ENCODE measurements at regions of chr18 and their contacts with region 1.

Region 1: DNA sequence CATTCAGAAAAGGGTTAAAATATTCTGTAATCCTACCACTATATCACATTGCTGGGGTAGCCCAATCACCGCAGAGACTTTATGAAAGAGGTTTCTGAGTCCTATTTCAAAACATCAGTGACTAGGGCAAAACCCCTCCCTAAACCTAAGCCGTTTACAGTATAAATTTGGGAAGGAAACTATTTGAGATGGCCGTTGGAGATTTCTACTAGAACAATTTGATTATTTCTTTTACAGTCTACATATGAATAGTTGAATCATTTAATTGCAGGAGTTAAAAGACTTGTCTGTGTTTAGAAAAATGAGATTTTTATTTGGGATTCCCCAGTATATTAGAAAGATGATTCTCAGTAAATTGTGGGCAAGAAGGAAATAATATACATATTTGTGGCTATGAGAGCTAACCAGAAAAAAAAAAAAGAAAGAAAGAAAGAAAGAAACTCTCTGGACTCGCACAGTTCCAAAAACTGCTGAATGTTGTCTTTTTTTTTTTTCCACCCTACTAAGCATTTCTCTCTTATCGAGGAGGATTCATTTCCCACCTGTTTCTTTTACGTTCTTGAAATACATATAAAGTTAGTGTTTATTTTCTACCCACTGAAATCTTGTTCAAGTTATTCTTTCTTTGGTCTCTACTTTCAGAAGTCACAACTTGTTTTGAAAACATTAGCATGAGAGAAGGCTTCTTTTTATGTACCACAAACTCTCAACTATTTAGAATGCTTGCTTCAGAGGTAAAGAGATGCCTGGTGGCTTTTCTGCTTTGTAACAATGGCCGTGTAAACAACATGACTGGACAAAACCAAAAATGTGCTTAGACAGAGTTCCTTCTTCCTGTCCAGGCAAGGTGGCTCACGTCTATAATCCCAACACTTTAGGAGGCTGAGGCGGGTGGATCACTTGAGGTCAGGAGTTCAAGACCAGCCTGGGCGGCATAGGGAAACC is 65.9 kb downstream of the BCL2 start:
- DNase-seq: no peak
- ATAC-seq: peak; percentile 74
- H3K4me3 ChIP-seq: no peak overlapping the region
- H3K4me3 Mint-ChIP-seq: peak overlapping the region in 8 of 10 donors; percentile 1 to 64 (median 32)
- H3K27ac ChIP-seq: no peak overlapping the region
- H3K27ac Mint-ChIP-seq: peak overlapping the region in 8 of 9 donors; percentile 9 to 79 (median 53)
- H3K4me1 ChIP-seq: peaks cover 7 to 25% of the 10 kb centered on the region in 2 donors
- H3K4me1 Mint-ChIP-seq: peaks cover 42 to 81% (median 73%) of the 10 kb centered on the region in 7 donors
- H3K27me3 ChIP-seq: no peaks in the 10 kb centered on the region
- H3K27me3 Mint-ChIP-seq: no peaks in the 10 kb centered on the region

Region 2: GRCh38 chr18:62545098-62545497 is 708.6 kb before region 1 on chr18:
- CTCF ChIA-PET with region 1: no interaction called
- POLR2A ChIA-PET with region 1: no interaction called
- intact Hi-C with region 1: no loop called
- DNase-seq: no peak
- ATAC-seq: no peak
- H3K4me3 ChIP-seq: no peak overlapping the region
- H3K4me3 Mint-ChIP-seq: no peak overlapping the region
- H3K27ac ChIP-seq: no peak overlapping the region
- H3K27ac Mint-ChIP-seq: no peak overlapping the region
- H3K4me1 ChIP-seq: no peaks in the 10 kb centered on the region
- H3K4me1 Mint-ChIP-seq: peaks cover 0 to 18% (median 15%) of the 10 kb centered on the region in 7 donors
- H3K27me3 ChIP-seq: no peaks in the 10 kb centered on the region
- H3K27me3 Mint-ChIP-seq: no peaks in the 10 kb centered on the region

Region 3: GRCh38 chr18:63236413-63236812 is 17.3 kb before region 1 on chr18:
- CTCF ChIA-PET with region 1: interaction called, 3 read pairs
- POLR2A ChIA-PET with region 1: interaction called, 3 read pairs
- intact Hi-C with region 1: loop called in 1 of 2 experiments (anchors 2 kb)
- DNase-seq: no peak
- ATAC-seq: peak; percentile 84
- H3K4me3 ChIP-seq: no peak overlapping the region
- H3K4me3 Mint-ChIP-seq: peak overlapping the region in 6 of 10 donors; percentile 9 to 62 (median 31)
- H3K27ac ChIP-seq: no peak overlapping the region
- H3K27ac Mint-ChIP-seq: peak overlapping the region; percentile 30 to 90 (median 72)
- H3K4me1 ChIP-seq: peaks cover 6 to 24% of the 10 kb centered on the region in 2 donors
- H3K4me1 Mint-ChIP-seq: peaks cover 49 to 83% (median 76%) of the 10 kb centered on the region in 7 donors
- H3K27me3 ChIP-seq: no peaks in the 10 kb centered on the region
- H3K27me3 Mint-ChIP-seq: no peaks in the 10 kb centered on the region

Region 4: DNA sequence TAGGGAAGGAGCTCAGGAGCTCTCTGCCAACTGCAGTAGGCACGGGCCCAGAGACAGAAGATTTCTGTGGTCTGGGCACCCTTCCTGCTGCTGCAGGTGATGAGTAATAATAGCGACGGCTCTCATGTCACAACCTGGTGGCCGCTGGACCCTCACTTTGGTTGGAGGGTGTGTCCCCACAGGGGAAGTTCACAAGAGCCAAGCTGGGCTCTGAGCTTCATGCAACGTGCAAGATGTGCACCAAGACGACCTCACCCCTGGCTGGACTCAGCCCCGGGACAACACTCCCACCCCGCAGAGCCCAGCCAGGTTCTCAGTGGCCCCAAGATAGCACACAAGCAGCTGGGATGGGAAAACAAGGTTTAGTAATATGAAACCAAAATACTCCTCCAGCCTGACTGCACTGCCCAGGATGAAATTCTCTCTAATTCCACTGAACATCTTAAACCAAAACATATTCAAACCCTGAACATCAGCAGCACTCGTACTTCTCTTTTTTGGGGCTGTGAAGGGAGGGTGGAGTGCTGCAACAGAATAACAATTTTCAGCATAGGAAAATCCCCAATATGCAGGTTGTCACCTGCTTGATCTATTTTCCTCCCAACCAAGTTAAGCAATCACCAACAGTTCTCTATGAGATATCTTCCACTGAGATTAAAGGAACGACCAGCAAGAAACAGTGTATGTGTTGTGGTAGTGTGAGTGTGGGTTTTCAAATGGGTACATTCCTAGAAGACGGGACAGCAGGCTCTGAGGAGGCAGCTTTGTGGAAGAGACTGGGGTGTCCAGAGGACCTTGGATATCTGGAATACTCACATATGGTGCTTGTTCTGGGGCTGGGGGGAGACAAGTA is 39.4 kb after region 1 on chr18:
- CTCF ChIA-PET with region 1: no interaction called
- POLR2A ChIA-PET with region 1: interaction called, 5 read pairs
- intact Hi-C with region 1: loop called in 1 of 2 experiments (anchors 5 kb)
- DNase-seq: no peak
- ATAC-seq: peak; percentile 54
- H3K4me3 ChIP-seq: no peak overlapping the region
- H3K4me3 Mint-ChIP-seq: peak overlapping the region in 7 of 10 donors; percentile 7 to 69 (median 50)
- H3K27ac ChIP-seq: peak overlapping the region; percentile 34
- H3K27ac Mint-ChIP-seq: peak overlapping the region in 6 of 9 donors; percentile 1 to 71 (median 38)
- H3K4me1 ChIP-seq: peaks cover 51 to 55% of the 10 kb centered on the region in 2 donors
- H3K4me1 Mint-ChIP-seq: peaks cover 11 to 65% (median 17%) of the 10 kb centered on the region in 7 donors
- H3K27me3 ChIP-seq: no peaks in the 10 kb centered on the region
- H3K27me3 Mint-ChIP-seq: no peaks in the 10 kb centered on the region

Region 5: GRCh38 chr18:63454497-63454896 is 200.8 kb after region 1 on chr18:
- CTCF ChIA-PET with region 1: no interaction called
- POLR2A ChIA-PET with region 1: no interaction called
- intact Hi-C with region 1: no loop called
- DNase-seq: no peak
- ATAC-seq: no peak
- H3K4me3 ChIP-seq: no peak overlapping the region
- H3K4me3 Mint-ChIP-seq: no peak overlapping the region
- H3K27ac ChIP-seq: no peak overlapping the region
- H3K27ac Mint-ChIP-seq: no peak overlapping the region
- H3K4me1 ChIP-seq: no peaks in the 10 kb centered on the region
- H3K4me1 Mint-ChIP-seq: no peaks in the 10 kb centered on the region
- H3K27me3 ChIP-seq: no peaks in the 10 kb centered on the region
- H3K27me3 Mint-ChIP-seq: peaks cover 0 to 13% (median 0%) of the 10 kb centered on the region in 5 donors

Measured in naive thymus-derived CD4-positive, alpha-beta T cell (primary cell).